Sciatic nerve (tissue), 2 donors: ENCODE measurements at regions of chr4 and their contacts with region 1.

Region 1: DNA sequence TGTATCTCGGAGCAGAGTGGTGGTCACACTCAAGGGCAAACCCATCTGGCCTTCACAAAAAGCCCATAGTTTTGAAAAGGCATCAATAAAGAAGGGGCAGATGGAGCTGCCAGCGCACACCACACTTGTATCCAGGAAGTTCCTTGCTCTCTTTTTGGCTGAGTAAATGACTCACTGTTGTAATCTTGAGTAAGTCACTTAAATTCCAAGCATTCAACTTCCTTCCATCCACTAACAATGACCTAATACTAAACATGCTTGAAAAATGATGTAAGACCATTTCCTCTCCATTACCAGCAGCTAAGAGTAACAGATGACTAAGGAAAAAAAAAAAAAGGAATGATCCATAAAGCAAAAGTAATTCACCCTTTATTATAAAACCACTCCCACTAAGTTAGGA is 32.4 kb upstream of the MYOZ2 start:
- DNase-seq: no peak
- ATAC-seq: peak; percentile 63

Region 2: DNA sequence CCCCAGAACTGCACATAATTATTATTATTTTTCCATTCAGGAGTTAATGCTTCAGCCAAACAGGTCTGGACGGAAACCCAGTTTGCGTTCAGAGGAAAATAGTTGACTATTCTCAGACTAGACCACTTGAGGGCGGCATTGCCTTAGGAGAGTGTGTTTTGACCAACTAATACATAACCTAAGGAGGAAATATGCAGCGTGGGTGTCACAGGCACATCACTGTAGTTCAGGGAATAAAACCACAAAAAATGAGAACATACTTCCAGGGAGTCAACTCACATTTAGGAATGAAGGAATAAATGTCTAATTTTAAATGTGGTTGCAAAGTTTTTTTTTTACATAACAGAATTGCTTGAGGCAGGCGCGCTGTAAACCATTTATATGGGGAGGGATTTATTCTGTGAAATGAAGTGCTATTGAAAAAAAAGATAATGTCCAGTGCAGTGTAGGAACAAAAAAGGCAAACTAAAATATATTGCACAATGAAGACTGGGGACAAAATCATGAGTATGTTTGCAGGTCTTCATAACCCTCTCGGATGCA is 121.4 kb before region 1 on chr4:
- intact Hi-C with region 1: loop called (anchors 10 kb)
- DNase-seq: peak; percentile 74
- ATAC-seq: peak; percentile 90

Region 3: GRCh38 chr4:119053997-119054396 is 49.3 kb before region 1 on chr4:
- intact Hi-C with region 1: loop called (anchors 2 kb)
- DNase-seq: no peak
- ATAC-seq: no peak

Region 4: GRCh38 chr4:119136546-119136945 is 33.3 kb after region 1 on chr4:
- intact Hi-C with region 1: loop called (anchors 2 kb)
- DNase-seq: no peak
- ATAC-seq: no peak

Region 5: GRCh38 chr4:119261986-119262385 is 158.7 kb after region 1 on chr4:
- intact Hi-C with region 1: no loop called
- DNase-seq: no peak
- ATAC-seq: no peak

Region 6: GRCh38 chr4:120801137-120801758 is 1698.0 kb after region 1 on chr4:
- intact Hi-C with region 1: no loop called
- DNase-seq: no peak
- ATAC-seq: peak; percentile 75